ENCODE measurements at regions of chr6 and their contacts with region 1.

Region 1: GRCh38 chr6:3294921-3295871 is 36.4 kb downstream of the PSMG4 start:
- DNase-seq: peak; percentile 20
- H3K4me3 ChIP-seq: no peak overlapping the region
- H3K27ac ChIP-seq: no peak overlapping the region
- H3K4me1 ChIP-seq: no peaks in the 10 kb centered on the region
- CTCF ChIP-seq: peak; percentile 40; the same call in 1 of the 2 replicates

Region 2: DNA sequence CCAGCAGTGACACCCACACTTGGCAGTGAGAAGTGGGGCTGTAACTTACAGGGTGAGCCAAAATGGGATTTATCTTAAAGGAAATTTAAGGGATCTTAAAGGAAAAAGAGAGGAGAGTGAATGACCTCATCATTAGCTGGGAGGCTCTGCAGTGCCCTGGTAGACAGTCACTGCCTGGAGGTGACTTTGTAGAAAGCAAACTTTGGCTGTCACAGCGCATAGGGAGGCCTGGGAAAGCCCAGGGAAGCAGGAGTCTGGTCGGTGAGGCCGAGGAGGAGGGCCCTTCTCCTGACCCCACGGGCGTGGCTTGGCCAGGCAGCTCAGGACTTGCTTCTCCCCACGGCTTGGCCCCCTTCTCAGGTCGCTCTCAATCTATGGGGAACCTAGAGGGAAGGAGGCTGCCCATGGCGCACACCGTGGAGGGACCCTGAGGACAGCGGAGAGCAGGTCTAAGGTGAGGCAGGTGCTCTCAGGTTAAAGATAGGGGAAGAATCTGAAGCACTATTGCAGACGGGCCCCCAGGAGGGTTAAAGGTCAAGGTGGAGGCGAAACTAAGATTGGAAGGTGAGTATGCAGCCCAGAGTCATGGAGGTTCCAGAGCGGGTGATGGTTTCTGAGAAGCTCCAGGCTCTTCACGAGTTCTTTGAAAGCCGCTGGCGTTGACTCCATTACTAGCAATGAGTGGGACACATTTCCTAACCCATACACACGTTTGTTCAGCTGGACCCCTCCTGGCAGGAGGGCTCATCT is 242.5 kb before region 1 on chr6:
- CTCF ChIA-PET with region 1: no interaction called
- POLR2A ChIA-PET with region 1: no interaction called
- intact Hi-C with region 1: no loop called
- DNase-seq: no peak
- H3K4me3 ChIP-seq: peak overlapping the region; percentile 68
- H3K27ac ChIP-seq: no peak overlapping the region
- H3K4me1 ChIP-seq: peaks cover 22% of the 10 kb centered on the region
- CTCF ChIP-seq: no peak

Region 3: DNA sequence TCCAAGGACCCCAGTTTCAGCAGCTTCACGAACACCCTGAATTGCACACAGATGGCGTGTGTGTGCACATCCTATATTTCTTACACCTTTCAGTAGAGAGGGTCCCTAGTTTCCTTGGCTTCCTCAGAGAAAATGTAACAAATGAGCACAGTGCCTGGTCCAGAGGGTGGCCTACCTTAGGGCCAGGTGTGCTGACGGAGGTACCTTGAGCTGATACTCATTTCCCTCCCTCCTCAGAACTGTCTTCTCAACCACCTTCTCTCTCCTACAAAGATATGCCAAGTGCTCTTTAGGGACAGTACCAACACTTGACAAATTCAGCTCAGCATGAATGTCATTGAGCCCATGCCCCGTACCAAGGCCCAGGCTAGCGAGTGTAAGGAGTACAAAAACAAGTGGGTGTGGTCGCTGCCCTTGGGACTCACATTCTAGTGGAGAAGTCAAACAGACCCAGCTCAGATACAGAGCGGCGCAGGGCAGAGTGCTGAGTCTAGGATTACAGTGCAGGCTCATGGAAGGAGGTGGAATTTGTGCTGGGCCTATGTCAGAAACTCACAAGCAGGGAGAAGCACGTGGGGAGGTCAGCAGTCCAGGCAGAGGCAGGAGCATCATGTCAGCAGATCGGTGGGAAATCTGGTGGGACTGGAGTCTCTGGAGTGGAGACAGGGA is 186.3 kb before region 1 on chr6:
- CTCF ChIA-PET with region 1: no interaction called
- POLR2A ChIA-PET with region 1: interaction called, 10 read pairs
- intact Hi-C with region 1: no loop called
- DNase-seq: no peak
- H3K4me3 ChIP-seq: no peak overlapping the region
- H3K27ac ChIP-seq: no peak overlapping the region
- H3K4me1 ChIP-seq: no peaks in the 10 kb centered on the region
- CTCF ChIP-seq: no peak

Region 4: GRCh38 chr6:3309391-3310050 is 14.3 kb after region 1 on chr6:
- CTCF ChIA-PET with region 1: no interaction called
- POLR2A ChIA-PET with region 1: no interaction called
- intact Hi-C with region 1: no loop called
- DNase-seq: no peak
- H3K4me3 ChIP-seq: no peak overlapping the region
- H3K27ac ChIP-seq: no peak overlapping the region
- H3K4me1 ChIP-seq: no peaks in the 10 kb centered on the region
- CTCF ChIP-seq: no peak